Breast epithelium (tissue), 4 donors: ENCODE measurements at regions of chr9 and their contacts with region 1.

Region 1: DNA sequence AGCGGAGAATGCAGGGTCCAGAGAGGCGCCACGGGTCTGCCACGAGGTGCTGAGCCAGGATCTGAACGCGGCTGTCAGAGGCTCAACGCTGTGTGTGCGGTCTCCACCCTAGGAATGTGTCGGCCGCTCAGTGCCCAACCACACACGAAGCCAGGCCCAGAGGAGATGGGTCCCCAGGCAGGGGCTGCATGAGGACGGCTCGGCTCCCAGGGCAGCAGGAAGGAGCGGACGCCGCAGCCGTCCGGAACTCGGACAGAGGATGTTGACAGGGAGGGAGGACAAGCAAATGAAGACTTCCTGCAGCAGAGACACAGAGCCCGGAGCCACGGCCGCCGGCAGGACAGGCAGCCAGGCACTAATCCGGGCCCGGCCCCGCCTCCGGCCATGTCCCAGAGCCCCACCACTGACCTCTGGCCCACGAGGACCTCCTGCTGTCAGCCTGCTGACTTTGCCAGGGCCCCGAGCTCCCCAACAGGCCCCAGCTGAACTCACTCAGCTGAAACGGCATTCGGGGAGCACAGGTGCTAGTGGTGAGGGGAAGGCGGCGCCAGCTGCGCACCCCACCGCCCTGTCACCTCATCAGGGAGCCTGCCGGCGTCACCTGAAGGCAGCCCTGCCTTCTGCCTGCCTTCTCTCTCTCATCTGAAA is 12.7 kb downstream of the VAV2 start:
- DNase-seq: no peak
- H3K4me3 ChIP-seq: peak overlapping the region in 2 of 3 donors; percentile 14 to 52
- H3K27ac ChIP-seq: peak overlapping the region in 1 of 2 donors; percentile 40
- H3K4me1 ChIP-seq: no peaks in the 10 kb centered on the region
- H3K27me3 ChIP-seq: no peaks in the 10 kb centered on the region
- CTCF ChIP-seq: no peak
- POLR2A ChIP-seq: no peak

Region 2: DNA sequence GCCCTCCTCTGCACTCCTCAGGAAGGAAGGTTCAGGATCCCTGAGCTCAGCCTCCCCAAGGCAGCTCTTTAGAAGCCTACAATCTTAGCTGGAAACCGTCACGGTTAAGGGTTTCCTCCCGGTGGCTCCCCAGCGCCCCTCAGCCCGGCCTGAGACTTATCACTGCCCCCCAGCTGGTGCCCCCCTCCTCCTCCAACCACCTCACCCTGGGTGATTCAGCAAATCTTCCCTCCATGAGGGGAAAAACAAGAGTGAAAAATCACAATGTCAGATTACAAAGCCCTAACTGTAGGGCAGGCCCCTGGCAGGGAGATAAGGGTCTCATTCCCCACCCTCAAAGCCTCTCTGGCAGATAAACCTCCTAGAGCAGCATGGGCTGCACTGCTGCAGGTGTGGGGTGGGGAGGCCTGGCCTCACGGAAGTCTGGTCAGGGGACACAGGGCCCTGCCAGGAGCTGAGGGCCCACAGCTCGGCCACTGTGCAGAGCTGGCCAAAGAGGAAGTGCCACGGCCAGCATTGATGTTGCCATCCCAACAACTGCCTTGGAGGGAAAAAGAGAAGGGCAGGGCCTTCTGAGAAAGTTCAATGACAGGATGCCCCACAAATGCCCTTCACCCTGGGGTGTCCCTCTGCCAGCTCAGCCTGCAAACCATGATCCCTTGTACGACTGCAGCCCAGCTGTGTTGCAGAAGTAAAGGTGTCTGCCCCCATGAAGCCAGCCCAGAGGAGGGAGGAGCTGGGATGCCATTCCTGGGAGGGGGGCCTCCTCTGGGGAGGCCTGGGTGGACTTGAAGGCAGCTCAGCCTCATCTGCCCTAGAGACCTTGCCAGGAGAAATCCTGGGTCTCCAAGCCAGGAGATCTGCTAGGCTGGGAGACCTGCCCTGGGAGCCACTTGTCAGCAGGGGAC is 975.1 kb before region 1 on chr9:
- intact Hi-C with region 1: no loop called
- DNase-seq: no peak
- H3K4me3 ChIP-seq: no peak overlapping the region
- H3K27ac ChIP-seq: no peak overlapping the region
- H3K4me1 ChIP-seq: no peaks in the 10 kb centered on the region
- H3K27me3 ChIP-seq: peaks cover 0 to 27% of the 10 kb centered on the region in 2 donors
- CTCF ChIP-seq: no peak
- POLR2A ChIP-seq: no peak

Region 3: GRCh38 chr9:133155156-133155555 is 824.2 kb before region 1 on chr9:
- intact Hi-C with region 1: loop called (anchors 5 kb)
- DNase-seq: no peak
- H3K4me3 ChIP-seq: no peak overlapping the region
- H3K27ac ChIP-seq: no peak overlapping the region
- H3K4me1 ChIP-seq: no peaks in the 10 kb centered on the region
- H3K27me3 ChIP-seq: no peaks in the 10 kb centered on the region
- CTCF ChIP-seq: no peak
- POLR2A ChIP-seq: no peak

Region 4: DNA sequence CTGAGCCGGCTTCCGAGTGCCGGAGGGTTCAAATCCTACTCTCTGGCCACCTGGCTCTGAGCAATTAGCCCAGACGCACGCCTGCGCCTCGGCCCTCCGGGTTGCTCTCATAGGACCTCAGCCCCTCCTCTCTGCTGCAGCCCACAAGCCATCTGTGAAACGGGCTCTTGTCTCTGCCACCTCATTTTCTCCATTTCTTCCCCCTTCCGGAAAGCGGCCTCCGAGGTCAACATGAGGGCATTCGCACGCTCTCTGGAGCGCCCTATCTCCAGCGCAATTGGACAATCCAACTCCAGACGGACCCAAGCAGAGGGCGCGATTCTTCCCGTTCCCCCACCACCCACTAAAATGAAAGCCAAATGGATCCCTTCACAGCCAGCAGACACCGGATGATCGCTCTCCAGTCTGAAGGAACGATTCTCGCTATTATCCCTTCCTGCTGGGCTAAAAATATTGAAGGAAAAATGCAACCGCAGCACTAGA is 28.7 kb before region 1 on chr9:
- intact Hi-C with region 1: loop called (anchors 1 kb)
- DNase-seq: no peak
- H3K4me3 ChIP-seq: peak overlapping the region in 2 of 3 donors; percentile 9 to 37
- H3K27ac ChIP-seq: no peak overlapping the region
- H3K4me1 ChIP-seq: no peaks in the 10 kb centered on the region
- H3K27me3 ChIP-seq: no peaks in the 10 kb centered on the region
- CTCF ChIP-seq: no peak
- POLR2A ChIP-seq: no peak